Right ventricle myocardium superior (tissue), 1 donor: ENCODE measurements at regions of chr17 and their contacts with region 1.

Region 1: GRCh38 chr17:3012926-3013581 is 50.4 kb downstream of the OR1D5 start:
- DNase-seq: peak; percentile 74
- ATAC-seq: peak; percentile 92

Region 2: DNA sequence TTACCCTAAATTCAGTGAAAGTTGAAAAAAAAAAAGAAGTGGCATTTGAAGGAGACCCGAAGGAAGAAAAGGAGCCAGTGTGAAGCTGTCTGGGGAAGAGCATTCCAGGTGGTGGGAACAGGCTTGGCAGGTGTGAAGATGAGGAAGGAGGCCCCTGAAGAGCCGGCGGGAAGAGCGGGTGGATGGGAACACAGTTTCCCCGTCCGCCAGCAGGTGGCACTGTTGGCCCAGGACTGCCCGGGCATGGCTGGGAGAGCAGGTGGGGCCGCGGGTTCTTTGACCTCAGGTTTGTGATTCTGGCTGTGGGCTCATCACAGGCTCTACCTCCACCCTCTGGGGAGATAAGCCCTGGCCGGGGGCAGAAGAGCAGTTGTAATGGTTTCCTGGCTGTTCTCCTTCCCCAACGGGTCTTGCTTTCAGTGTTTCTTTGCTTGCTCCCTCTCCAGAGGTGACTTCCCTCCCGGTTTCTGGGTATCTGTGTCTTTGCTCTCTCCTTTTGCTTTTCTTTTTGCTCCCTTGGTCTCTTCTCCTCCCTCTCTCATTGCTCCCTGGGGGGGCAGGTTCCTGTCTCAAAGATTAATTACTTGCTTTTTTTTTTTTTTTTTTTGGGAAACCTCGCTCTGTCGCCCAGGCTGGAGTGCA is 184.5 kb before region 1 on chr17:
- intact Hi-C with region 1: loop called (anchors 2 kb)
- DNase-seq: peak; percentile 84
- ATAC-seq: peak; percentile 92